Gastrocnemius medialis (tissue), 4 donors: ENCODE measurements at regions of chr5 and their contacts with region 1.

Region 1: GRCh38 chr5:113022661-113023060 is 46.1 kb downstream of the DCP2 start:
- DNase-seq: no peak
- ATAC-seq: no peak
- H3K4me3 ChIP-seq: no peak overlapping the region
- H3K27ac ChIP-seq: no peak overlapping the region
- H3K4me1 ChIP-seq: no peaks in the 10 kb centered on the region
- H3K27me3 ChIP-seq: no peaks in the 10 kb centered on the region
- CTCF ChIP-seq: no peak
- POLR2A ChIP-seq: no peak

Region 2: DNA sequence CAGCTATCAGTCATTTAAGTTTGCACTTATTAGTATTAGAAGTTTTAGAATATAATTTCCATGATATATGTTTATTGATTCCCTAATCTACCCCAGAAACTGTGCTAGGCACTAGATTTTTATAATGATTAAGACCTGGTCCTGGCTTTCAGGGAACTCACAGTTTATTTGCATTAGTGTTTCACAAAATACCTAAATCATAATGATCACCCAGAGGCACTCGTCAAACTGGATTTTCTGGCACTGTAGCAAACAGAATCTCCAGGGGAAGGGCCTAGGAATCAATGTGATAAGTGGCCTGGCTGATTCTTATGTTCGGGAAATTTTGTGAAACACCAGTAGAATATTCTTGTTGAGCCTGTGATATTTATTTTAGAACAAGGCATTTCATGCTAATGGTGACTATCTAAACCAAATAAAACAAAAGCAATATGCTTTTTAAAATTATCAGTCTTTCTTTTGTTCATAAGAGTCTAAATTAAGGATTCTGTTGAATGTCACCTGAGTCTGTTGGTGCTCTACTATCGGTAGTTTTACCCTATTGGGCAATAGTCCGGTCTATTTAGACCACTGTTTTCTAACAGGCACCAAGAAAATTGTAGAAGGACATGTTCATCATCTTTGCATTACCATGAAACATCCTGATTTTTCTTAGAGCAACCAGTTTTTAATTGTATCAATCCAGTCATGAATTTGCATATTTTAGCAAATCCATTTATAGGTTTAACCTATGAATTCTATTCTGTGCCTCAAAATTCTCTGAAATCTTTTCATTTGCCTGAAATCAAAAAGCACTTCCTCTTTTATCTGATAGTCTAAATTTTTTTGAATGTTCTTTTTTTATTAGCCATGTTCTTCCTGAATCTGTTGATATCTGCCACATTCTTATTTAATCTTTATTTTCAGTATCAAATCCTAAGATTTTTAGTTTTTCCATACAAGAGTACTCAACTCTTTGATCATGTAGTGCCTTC is 198.8 kb before region 1 on chr5:
- in situ Hi-C with region 1: no loop called
- intact Hi-C with region 1: no loop called
- DNase-seq: no peak
- ATAC-seq: no peak
- H3K4me3 ChIP-seq: no peak overlapping the region
- H3K27ac ChIP-seq: no peak overlapping the region
- H3K4me1 ChIP-seq: no peaks in the 10 kb centered on the region
- H3K27me3 ChIP-seq: no peaks in the 10 kb centered on the region
- CTCF ChIP-seq: no peak
- POLR2A ChIP-seq: no peak

Region 3: GRCh38 chr5:113330533-113331208 is 308.0 kb after region 1 on chr5:
- in situ Hi-C with region 1: loop called in 1 of 4 experiments (anchors 25 kb)
- intact Hi-C with region 1: no loop called
- DNase-seq: peak; percentile 30 to 59
- ATAC-seq: peak; percentile 87
- H3K4me3 ChIP-seq: peak overlapping the region in 1 of 4 donors; percentile 4
- H3K27ac ChIP-seq: peak overlapping the region in 2 of 4 donors; percentile 20 to 67
- H3K4me1 ChIP-seq: peaks cover 0 to 5% of the 10 kb centered on the region in 2 donors
- H3K27me3 ChIP-seq: no peaks in the 10 kb centered on the region
- CTCF ChIP-seq: peak in 2 of 5 experiments; percentile 34 to 50
- POLR2A ChIP-seq: no peak